ENCODE measurements at regions of chr19 and their contacts with region 1.

Region 1: DNA sequence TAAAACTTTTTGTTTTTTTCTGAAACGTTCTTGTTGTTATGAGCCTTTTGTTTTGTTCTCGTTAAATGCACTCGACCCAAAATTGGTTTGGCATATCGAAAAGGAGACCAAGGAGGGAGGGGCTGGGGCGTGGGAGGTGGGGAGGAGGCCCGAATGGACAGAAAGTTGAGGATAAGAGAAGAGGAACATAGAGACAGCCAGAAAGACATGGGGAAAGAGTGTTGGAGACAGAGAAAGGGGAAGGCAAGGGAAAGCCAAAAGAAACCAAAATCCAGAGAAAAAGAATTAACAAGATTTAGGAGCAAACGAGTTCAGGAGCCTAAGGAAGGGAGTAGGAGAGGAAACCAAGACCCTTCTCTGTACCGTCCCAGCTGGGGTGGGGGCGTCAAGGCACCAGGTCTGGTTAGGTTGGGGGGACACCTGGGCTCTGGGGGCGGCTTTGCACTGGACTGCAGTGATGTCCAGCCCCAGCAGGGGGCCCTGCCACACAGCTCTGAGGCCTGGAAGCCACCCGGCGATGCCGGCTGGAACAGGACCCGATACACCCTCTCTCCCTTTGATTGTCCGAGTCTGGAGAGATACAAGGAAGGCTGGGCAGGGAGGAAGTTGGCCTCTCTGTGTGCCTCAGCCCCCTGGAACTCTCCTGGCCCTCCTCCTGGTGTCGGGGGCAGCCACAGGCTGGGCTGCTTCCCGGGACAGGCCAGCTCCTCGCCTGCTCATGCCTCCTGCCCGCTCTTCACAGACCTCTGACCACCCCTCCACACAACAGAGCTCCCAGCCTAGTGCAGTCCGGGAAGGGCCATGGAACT is 11.6 kb upstream of the ASF1B start:
- DNase-seq: peak; percentile 39
- ATAC-seq: peak; percentile 93
- H3K4me3 ChIP-seq: peak overlapping the region in 2 of 3 experiments; percentile 35 to 68; a peak in 3 of 6 replicates
- H3K27ac ChIP-seq: no peak overlapping the region
- H3K4me1 ChIP-seq: peaks cover 7% of the 10 kb centered on the region; the same call in 1 of the 2 replicates
- H3K27me3 ChIP-seq: no peaks in the 10 kb centered on the region; a peak in 1 of 5 replicates
- CTCF ChIP-seq: peak; percentile 90
- EP300 ChIP-seq: no peak
- POLR2A ChIP-seq: no peak
- RAD21 ChIP-seq: peak; percentile 73

Region 2: DNA sequence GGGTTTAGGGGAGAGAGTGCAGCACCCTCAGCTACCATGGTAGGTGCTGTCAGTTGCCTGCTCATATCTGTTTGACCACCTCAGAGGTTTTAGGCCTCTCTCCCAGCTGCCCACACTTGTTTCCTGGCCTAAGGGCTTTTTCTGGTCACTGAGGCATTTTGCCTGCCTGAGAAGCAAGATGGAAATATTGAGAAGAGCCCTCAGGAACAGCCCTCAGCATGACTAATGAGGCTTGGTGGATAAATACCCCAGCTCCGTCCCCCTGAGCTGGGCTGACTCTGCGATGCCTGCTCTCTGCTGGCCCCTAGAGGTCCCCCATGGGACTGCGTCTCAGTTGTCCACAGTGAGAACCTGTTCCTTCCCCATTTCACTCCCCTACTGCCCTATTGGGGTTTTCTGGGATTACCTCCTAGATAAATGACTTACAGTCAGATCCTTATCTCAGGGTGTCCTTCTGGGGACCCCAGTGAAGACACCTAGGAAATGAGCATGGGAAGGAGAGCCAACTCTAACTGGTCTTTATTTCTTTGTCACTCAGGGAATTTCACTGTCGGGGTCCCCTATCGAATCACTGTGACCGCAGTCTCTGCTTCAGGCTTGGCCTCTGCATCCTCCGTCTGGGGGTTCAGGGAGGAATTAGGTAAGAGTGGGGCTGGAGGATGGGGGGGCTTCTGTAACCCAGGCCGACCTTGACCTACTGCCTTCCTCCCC is 99.4 kb before region 1 on chr19:
- CTCF ChIA-PET with region 1: no interaction called
- POLR2A ChIA-PET with region 1: no interaction called
- in situ Hi-C with region 1: no loop called
- intact Hi-C with region 1: no loop called
- DNase-seq: peak; percentile 23
- ATAC-seq: peak; percentile 72
- H3K4me3 ChIP-seq: no peak overlapping the region
- H3K27ac ChIP-seq: no peak overlapping the region
- H3K4me1 ChIP-seq: no peaks in the 10 kb centered on the region
- H3K27me3 ChIP-seq: no peaks in the 10 kb centered on the region
- CTCF ChIP-seq: peak; percentile 72
- EP300 ChIP-seq: no peak
- POLR2A ChIP-seq: no peak
- RAD21 ChIP-seq: peak; percentile 41

Region 3: GRCh38 chr19:14061756-14062562 is 86.0 kb before region 1 on chr19 and contains the start of gene PALM3:
- CTCF ChIA-PET with region 1: no interaction called
- POLR2A ChIA-PET with region 1: no interaction called
- in situ Hi-C with region 1: no loop called
- intact Hi-C with region 1: no loop called
- DNase-seq: no peak
- ATAC-seq: peak; percentile 26
- H3K4me3 ChIP-seq: peak within 1 kb of the TSS; percentile 52 to 73 (median 58)
- H3K27ac ChIP-seq: peak within 1 kb of the TSS; percentile 81
- H3K4me1 ChIP-seq: peaks cover 45% of the 10 kb centered on the region
- H3K27me3 ChIP-seq: no peaks in the 10 kb centered on the region
- CTCF ChIP-seq: 0 out of 2 replicates have a peak, but pooled peaks have one; percentile 9
- EP300 ChIP-seq: no peak
- POLR2A ChIP-seq: no peak
- RAD21 ChIP-seq: no peak
- total RNA-seq, gene PALM3: 2.4 and 2.5 TPM in 2 replicates

Region 4: DNA sequence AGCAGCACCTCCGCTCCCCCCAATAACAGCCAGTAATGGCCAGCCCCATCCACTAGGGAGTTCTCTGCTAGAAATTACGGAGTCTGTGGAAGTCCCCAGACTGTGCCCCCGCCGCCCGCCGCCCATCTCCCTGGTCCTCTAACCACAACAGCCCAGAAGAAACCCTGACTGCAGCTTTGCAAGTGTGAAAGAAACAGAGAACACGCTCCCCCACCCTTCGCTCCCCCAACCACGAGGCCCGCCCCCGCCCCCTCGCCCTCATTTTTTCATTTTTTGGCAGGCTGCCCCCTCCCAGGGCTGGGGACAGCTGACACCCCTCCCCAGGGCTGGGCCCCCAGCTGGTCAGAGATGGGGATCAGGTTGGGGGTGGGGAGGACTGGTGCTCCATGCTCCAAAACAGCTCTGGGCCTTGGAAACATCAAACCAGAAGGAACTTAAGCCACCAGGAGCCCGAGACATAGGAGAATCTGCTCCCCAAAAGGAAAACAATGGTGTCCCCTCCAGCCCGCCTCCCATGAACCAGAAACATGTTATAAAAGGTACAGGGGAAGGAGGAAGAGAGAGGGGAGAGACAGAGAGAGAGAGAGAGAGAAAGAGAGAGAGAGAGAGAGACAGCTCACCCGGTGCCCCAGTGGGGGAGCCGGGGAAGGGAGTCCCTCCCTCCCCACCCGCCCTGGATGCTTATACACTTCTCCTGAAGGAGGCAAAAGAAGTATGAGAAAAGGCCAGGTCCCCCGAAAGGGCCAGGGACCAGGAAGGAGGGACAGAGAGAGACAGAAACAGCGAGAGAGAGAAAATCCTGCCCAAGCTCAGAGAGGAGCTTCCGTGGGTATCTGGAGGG is 18.2 kb after region 1 on chr19:
- CTCF ChIA-PET with region 1: no interaction called
- POLR2A ChIA-PET with region 1: no interaction called
- in situ Hi-C with region 1: no loop called
- intact Hi-C with region 1: loop called (anchors 1 kb)
- DNase-seq: no peak
- ATAC-seq: no peak
- H3K4me3 ChIP-seq: no peak overlapping the region
- H3K27ac ChIP-seq: no peak overlapping the region
- H3K4me1 ChIP-seq: no peaks in the 10 kb centered on the region
- H3K27me3 ChIP-seq: no peaks in the 10 kb centered on the region
- CTCF ChIP-seq: no peak
- EP300 ChIP-seq: no peak
- POLR2A ChIP-seq: no peak
- RAD21 ChIP-seq: no peak

Measured in HepG2 (cell line).